Posterior vena cava (tissue), 2 donors: ENCODE measurements at regions of chr1 and their contacts with region 1.

Region 1: GRCh38 chr1:119286587-119287181 is 81.9 kb upstream of the HAO2 start:
- DNase-seq: no peak

Region 2: GRCh38 chr1:119372490-119373086 is 85.9 kb after region 1 on chr1:
- intact Hi-C with region 1: loop called in 1 of 2 experiments (anchors 10 kb)
- DNase-seq: no peak